Activated CD4-positive, alpha-beta T cell treated with anti-CD3 and anti-CD28 coated beads for 36 hours (primary cell): ENCODE measurements at regions of chr9 and their contacts with region 1.

Region 1: DNA sequence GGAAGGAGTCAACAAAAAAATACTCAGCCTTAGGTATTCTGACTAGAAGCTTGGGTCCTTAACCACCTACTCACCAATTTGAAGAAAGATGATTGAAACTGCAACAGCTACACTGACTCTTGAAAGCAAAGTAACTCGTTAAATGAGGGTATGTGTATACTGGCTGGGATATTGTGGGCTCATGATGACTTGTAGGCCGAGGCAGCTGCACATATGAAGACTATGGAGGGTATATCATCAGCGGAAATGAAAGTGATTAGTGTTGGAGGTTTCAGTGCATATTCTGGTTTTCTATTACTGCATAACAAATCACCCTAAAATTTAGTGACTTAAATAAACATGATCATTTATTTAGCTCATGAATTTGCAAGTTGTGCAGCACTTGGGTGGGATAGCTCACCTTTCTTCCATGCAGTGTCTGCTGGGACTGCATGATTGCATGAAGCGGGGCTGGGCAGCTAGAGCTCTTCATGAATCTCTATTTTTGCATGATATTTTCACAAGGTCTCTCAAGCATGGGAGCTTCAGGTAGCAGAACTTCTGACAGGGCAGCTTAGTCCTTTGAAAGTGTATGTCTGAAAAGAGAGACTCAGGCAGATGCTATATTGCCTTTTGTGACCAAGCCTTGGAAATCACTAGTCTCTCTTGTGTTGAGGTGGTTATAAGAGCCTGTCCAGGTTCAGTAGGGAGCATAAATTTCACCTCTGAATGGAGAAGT is 96.1 kb upstream of the CDKN2B start:
- DNase-seq: peak; percentile 31
- ATAC-seq: peak; percentile 96
- H3K4me3 Mint-ChIP-seq: no peak overlapping the region
- H3K27ac Mint-ChIP-seq: no peak overlapping the region
- H3K4me1 Mint-ChIP-seq: peaks cover 12% of the 10 kb centered on the region
- H3K27me3 Mint-ChIP-seq: peaks cover 14% of the 10 kb centered on the region

Region 2: GRCh38 chr9:21395778-21396717 is 709.1 kb before region 1 on chr9:
- CTCF ChIA-PET with region 1: no interaction called
- POLR2A ChIA-PET with region 1: no interaction called
- intact Hi-C with region 1: no loop called
- DNase-seq: peak; percentile 78
- ATAC-seq: peak; percentile 74
- H3K4me3 Mint-ChIP-seq: peak overlapping the region; percentile 52
- H3K27ac Mint-ChIP-seq: peak overlapping the region; percentile 66
- H3K4me1 Mint-ChIP-seq: peaks cover 15% of the 10 kb centered on the region
- H3K27me3 Mint-ChIP-seq: peaks cover 47% of the 10 kb centered on the region

Region 3: GRCh38 chr9:22119537-22120158 is 14.5 kb after region 1 on chr9:
- CTCF ChIA-PET with region 1: interaction called, 19 read pairs
- POLR2A ChIA-PET with region 1: no interaction called
- intact Hi-C with region 1: no loop called
- DNase-seq: peak; percentile 15
- ATAC-seq: peak; percentile 42
- H3K4me3 Mint-ChIP-seq: no peak overlapping the region
- H3K27ac Mint-ChIP-seq: no peak overlapping the region
- H3K4me1 Mint-ChIP-seq: no peaks in the 10 kb centered on the region
- H3K27me3 Mint-ChIP-seq: peaks cover 30% of the 10 kb centered on the region

Region 4: DNA sequence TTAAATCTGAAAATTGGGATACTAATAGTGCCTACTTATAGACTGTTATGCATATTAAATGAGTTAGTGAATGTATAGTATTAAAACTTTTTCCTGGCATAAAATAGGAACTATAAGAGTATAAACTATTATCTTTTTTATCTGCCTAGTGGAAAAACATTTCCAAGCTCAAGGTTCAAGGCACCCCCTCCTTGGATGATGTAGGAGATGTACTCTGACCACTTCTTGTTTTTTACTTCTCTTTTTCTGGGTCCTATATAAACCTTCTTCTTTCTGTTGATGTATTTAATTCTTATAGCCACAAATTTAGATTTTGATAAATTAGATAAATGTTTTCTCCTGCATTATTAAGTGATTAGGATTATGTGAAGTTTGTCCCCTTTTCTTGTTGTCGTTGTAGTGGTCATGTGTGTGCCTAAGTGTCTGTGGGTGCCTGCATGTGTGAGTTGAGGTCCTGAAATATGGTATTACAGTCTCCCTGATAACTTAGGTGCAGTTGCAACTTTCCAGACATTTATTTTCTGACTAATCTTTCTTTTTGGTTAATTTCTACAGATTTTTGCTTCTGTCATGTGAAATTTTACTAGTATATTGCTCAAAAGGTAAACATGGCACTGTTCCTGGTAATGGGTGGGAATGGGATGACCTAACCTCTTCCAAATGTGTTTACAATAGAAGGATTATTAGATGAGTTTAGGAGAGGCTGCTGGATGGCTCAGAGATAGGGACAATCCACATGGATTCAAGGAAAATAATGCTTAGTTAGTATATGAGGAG is 64.8 kb after region 1 on chr9:
- CTCF ChIA-PET with region 1: no interaction called
- POLR2A ChIA-PET with region 1: no interaction called
- intact Hi-C with region 1: no loop called
- DNase-seq: no peak
- ATAC-seq: no peak
- H3K4me3 Mint-ChIP-seq: no peak overlapping the region
- H3K27ac Mint-ChIP-seq: no peak overlapping the region
- H3K4me1 Mint-ChIP-seq: no peaks in the 10 kb centered on the region
- H3K27me3 Mint-ChIP-seq: peaks cover 6% of the 10 kb centered on the region

Region 5: GRCh38 chr9:22200324-22200723 is 95.2 kb after region 1 on chr9:
- CTCF ChIA-PET with region 1: no interaction called
- POLR2A ChIA-PET with region 1: no interaction called
- intact Hi-C with region 1: no loop called
- DNase-seq: no peak
- ATAC-seq: no peak
- H3K4me3 Mint-ChIP-seq: no peak overlapping the region
- H3K27ac Mint-ChIP-seq: no peak overlapping the region
- H3K4me1 Mint-ChIP-seq: peaks cover 8% of the 10 kb centered on the region
- H3K27me3 Mint-ChIP-seq: peaks cover 28% of the 10 kb centered on the region

Region 6: DNA sequence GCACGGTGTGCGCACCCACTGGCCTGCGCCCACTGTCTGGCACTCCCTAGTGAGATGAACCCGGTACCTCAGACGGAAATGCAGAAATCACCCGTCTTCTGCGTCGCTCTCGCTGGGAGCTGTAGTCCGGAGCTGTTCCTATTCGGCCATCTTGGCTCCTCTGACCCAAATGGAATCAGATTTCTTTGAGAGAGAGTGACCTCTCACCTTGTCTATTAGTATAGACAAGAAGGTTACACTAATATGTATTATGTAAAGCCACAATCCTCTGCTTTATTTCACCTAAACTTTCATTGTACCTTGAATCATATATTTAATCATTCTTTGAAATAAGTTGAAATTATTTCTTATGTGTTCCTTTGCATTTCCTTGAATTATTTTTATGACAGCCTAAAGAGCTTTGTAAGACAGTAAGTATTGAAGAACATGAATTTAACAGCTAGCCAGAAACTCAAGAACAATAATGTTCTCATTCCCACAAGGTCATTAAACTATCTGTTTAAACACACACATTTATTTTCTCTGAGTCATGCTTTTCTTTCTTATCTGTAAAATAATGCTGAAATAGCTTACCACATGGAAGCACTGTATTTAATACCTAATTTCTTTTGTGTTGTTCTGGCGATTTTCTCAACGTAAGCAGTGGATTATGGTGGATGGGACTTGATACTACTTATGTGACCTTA is 249.7 kb after region 1 on chr9:
- CTCF ChIA-PET with region 1: no interaction called
- POLR2A ChIA-PET with region 1: no interaction called
- intact Hi-C with region 1: no loop called
- DNase-seq: no peak
- ATAC-seq: no peak
- H3K4me3 Mint-ChIP-seq: no peak overlapping the region
- H3K27ac Mint-ChIP-seq: no peak overlapping the region
- H3K4me1 Mint-ChIP-seq: no peaks in the 10 kb centered on the region
- H3K27me3 Mint-ChIP-seq: no peaks in the 10 kb centered on the region